Right lobe of liver (tissue), 6 donors: ENCODE measurements at regions of chr19 and their contacts with region 1.

Region 1: GRCh38 chr19:41563854-41564514 is 12.0 kb upstream of the CEACAM21 start:
- DNase-seq: no peak
- ATAC-seq: peak in 1 of 4 donors; percentile 20
- H3K4me3 ChIP-seq: no peak overlapping the region
- H3K27ac ChIP-seq: no peak overlapping the region
- H3K4me1 ChIP-seq: no peaks in the 10 kb centered on the region
- H3K27me3 ChIP-seq: peaks cover 0 to 15% of the 10 kb centered on the region in 2 donors
- CTCF ChIP-seq: no peak
- POLR2A ChIP-seq: no peak

Region 2: DNA sequence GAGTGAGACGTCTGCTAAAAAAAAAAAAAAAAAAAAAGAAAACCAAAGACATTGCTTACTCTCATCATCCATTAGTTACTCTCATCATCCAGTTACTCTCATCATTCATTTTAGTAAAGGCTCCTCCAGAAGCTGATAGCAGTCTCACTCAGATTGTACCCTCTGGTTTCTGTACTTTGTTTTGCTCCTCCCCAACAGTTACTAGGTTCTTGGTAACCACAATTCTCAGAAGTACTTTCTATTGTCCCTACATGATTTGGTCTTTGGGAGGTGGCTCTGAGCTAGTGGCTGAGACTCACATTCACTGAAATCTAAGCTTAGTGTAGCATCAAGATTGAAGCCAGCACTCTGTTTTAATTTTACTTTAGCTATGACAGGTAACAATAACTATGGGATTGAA is 106.7 kb before region 1 on chr19:
- intact Hi-C with region 1: loop called in 1 of 2 experiments (anchors 10 kb)
- DNase-seq: no peak
- ATAC-seq: no peak
- H3K4me3 ChIP-seq: no peak overlapping the region
- H3K27ac ChIP-seq: no peak overlapping the region
- H3K4me1 ChIP-seq: no peaks in the 10 kb centered on the region
- H3K27me3 ChIP-seq: no peaks in the 10 kb centered on the region
- CTCF ChIP-seq: no peak
- POLR2A ChIP-seq: no peak

Region 3: GRCh38 chr19:41479757-41480191 is 84.2 kb before region 1 on chr19:
- intact Hi-C with region 1: no loop called
- DNase-seq: peak in 1 of 3 donors; percentile 58
- ATAC-seq: peak; percentile 54 to 79 (median 70)
- H3K4me3 ChIP-seq: no peak overlapping the region
- H3K27ac ChIP-seq: peak overlapping the region in 2 of 3 donors; percentile 8 to 54
- H3K4me1 ChIP-seq: no peaks in the 10 kb centered on the region
- H3K27me3 ChIP-seq: no peaks in the 10 kb centered on the region
- CTCF ChIP-seq: no peak
- POLR2A ChIP-seq: no peak